ENCODE measurements at regions of chr15 and their contacts with region 1.

Region 1: DNA sequence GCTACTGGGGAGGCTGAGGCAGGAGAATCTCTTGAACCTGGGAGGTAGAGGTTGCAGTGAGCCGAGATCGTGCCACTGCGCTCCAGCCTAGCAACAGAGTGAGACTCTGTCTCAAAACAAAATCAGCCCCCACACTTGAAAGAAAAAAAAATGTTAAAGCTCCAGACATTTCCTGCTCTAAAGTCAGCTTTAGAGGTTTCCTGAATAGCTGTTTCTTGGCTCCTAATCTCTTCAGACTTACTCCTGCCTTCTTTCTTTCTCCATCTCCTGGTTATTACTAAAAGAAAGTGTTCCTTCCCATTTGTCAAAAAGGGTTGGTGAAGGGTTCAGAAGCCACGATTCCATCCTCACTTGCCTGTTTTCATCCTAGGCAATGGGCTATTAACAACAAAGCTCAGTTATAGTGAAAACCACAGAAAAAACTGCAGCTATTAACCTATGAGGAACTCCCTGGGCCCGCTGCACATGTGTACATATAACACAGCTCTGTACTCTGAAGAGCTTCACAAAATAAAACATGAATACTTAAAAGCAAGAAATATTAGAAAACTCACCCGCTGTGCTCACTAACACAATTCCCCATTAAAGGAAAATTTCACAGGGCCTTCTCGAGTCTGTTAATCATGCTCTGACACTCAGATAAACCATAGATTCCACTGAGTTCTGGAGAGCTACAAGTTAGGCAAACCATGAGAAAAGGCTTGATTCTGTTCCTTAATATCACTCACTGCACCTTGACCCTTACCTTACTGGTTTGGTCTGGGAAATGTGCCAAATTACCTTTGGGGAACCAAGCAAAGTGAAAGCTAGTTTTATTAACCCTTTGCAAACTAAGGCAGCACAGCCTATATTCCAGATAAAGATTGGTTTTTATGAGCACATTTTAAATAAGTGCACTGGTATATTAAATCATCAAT is 89.9 kb upstream of the TSPAN3 start:
- DNase-seq: no peak
- ATAC-seq: peak; percentile 30
- H3K4me3 Mint-ChIP-seq: no peak overlapping the region
- H3K27ac Mint-ChIP-seq: peak overlapping the region; percentile 46
- H3K4me1 Mint-ChIP-seq: peaks cover 25% of the 10 kb centered on the region
- H3K27me3 Mint-ChIP-seq: no peaks in the 10 kb centered on the region

Region 2: DNA sequence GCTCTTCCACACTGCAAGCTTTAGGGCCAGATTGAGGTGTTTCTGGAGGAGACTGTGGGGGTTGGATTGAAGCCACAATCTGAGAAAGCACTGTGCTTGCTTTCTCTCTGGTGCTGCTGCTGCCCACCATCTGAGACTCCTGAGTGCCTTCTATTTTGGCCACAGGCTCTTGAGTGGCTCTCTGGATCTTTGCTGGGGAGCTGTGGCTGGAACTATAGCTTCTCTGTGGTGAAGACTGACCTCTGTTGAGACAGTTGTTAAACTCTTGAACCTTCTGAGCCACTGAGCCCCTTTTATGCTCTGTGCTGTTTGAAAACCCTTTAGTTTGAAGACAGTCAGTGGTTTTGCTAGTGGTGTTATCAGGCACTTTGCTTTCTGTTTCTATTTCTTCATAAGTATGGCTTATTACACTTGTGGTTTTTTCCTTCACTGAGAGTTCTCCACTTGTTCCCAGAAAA is 18.8 kb after region 1 on chr15:
- CTCF ChIA-PET with region 1: interaction called, 11 read pairs
- DNase-seq: peak; percentile 66
- ATAC-seq: peak; percentile 82
- H3K4me3 Mint-ChIP-seq: peak overlapping the region; percentile 27
- H3K27ac Mint-ChIP-seq: peak overlapping the region; percentile 92
- H3K4me1 Mint-ChIP-seq: peaks cover 43% of the 10 kb centered on the region
- H3K27me3 Mint-ChIP-seq: no peaks in the 10 kb centered on the region

Measured in activated CD8-positive, alpha-beta memory T cell treated with anti-CD3 and anti-CD28 coated beads, Interleukin-2, amount 10 ng/mL, durations not matched to agents 7 days and 5 days (primary cell).